ENCODE measurements at regions of chr5 and their contacts with region 1.

Region 1: DNA sequence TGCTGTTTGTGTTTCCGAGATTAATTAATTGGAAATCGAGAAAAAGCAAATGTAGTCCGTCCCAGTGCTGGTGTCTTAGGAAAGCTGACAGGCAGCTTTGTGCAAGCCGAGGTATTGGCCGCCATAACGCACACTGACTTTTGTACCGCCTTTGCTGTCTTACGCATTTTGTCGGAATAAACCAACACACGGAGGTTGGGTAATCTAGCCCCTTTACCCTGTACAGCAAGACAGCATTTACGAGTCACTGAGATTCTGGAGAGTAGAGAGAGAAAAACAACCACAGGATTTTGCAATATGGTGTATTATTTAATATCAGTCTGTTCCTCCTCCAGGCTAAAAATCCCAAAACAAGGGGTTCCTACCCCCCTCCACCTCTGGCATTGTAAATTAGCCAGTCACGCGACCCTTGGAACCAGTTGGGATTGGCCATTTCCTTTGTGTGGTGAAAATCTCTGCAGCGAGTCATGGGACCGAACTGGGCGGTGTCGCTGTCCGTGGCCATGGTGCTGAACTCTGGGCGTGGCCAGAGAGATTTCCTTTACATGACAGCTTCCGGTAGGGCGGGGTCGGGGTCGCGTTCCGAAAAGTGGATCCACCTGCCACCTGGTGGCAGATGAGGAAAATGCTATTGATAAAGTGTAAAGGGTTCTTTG is 10.3 kb upstream of the PCDHB1 start:
- DNase-seq: peak; percentile 99
- H3K27ac ChIP-seq: peak overlapping the region; percentile 32; the same call in 1 of the 2 replicates
- CTCF ChIP-seq: peak; percentile 86

Region 2: DNA sequence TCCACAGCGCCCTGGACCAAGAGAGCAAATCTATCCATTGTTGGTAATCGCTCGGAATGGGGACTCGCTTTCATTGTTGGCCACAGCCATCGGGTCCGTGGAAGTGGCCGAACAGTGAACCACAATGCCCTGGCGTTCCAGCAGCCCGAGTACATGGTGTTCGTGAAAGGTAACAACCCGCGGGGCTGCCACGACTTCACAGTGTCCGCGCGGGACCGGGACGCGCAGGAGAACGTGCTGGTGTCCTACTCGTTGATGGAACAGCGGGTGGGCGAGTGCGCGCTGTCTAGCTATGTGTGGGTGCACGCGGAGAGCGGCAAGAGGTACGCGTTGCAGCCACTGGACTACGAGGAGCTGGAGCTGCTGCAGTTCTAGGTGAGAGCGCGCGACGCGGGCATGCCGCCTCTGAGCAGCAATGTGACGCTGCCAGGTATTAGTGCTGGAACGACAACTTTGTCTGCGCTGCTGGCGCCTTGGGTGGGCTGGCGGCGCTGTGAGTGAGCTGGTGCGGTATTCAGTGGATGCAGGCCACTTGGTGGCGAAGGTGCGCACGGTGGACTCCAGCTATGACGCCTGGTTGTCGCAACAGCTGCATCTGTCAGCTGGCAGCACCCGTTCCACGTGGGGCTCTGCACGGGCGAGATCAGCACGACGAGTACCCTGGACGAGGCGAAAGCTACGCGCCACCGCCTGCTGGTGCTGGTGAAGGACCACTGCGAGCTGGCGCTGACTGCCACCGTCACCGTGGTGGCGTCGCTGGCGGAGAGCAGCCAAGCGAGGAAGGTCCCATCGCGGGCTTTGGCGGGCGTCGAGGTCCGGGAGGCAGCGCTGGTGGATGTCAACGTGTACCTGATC is 178.2 kb before region 1 on chr5:
- CTCF ChIA-PET with region 1: interaction called, 27 read pairs
- POLR2A ChIA-PET with region 1: no interaction called
- DNase-seq: no peak
- H3K27ac ChIP-seq: no peak overlapping the region
- CTCF ChIP-seq: no peak

Region 3: DNA sequence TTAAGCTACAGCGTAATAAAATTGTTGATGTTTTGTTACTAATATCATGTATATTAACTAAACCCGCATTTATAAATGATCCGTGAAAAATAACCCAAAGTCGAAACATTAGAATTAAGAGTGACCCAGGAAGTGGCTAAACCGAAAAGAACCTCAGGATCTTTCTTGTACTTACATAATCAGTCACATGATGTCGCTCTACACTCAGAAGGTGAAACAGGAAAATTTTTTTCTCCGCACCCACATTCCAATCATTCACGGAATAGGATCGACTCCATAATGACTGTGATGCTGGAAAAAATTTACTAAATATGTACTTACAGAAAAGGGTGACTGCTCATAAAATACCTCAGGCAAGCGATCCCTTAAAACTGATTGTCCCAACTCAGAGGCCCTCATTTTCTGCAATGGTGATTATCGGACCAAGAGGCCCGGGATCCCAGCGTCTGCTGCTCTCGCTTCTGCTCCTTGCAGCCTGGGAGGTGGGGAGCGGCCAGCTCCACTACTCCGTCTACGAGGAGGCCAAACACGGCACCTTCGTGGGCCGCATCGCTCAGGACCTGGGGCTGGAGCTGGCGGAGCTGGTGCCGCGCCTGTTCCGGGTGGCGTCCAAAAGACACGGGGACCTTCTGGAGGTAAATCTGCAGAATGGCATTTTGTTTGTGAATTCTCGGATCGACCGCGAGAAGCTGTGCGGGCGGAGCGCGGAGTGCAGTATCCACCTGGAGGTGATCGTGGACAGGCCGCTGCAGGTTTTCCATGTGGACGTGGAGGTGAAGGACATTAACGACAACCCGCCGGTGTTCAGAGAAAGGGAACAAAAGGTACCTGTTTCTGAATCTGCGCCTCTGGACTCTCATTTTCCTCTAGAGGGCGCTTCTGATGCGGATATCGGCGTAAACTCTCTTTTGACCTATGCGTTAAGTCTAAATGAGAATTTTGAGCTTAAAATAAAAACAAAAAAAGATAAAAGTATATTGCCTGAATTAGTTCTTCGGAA is 165.5 kb before region 1 on chr5 and contains the start of gene PCDHA12:
- CTCF ChIA-PET with region 1: interaction called, 50 read pairs
- POLR2A ChIA-PET with region 1: no interaction called
- DNase-seq: peak; percentile 54
- H3K27ac ChIP-seq: no peak within 1 kb of the TSS
- CTCF ChIP-seq: peak; percentile 12; the same call in 1 of the 2 replicates

Region 4: DNA sequence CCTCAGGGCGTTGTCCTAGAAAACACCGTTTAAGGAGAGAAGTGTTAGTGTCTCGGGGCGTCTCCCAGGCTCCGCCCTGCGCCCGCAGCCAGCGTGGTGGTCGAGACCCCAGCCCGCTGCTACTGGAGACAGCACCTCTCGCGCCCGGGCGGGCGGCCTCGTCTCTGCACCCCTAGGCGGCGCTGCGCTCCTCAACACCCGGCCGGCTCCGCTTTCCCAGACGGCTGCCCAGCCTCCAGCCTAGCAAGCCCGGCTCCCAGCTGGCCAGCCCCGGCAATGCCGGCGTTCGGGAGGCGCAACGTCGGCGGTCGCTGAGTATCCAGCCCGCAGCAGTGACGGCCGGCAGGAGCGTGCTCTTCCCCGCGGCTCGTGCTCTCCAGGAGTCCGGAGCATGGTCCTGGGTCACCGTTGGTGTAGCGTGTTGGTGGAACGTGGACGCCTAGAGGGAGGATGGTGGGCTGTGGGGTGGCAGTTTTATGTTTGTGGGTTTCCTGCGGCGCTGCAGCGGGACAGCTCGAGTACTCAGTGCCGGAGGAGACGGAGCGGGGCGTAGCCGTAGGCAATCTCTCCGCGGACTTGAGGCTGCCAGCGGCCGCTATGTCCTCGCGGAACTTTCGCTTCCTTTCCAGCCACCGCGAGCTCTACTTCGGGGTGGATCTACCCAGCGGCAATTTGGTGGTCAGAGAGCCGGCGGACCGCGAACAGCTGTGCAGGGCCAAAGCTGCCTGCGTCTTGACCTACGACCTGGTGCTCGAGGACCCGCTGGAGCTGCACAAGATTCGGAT is 114.3 kb before region 1 on chr5:
- CTCF ChIA-PET with region 1: interaction called, 85 read pairs
- POLR2A ChIA-PET with region 1: interaction called, 7 read pairs
- DNase-seq: peak; percentile 92
- H3K27ac ChIP-seq: peak overlapping the region; percentile 59
- CTCF ChIP-seq: peak; percentile 98

Region 5: DNA sequence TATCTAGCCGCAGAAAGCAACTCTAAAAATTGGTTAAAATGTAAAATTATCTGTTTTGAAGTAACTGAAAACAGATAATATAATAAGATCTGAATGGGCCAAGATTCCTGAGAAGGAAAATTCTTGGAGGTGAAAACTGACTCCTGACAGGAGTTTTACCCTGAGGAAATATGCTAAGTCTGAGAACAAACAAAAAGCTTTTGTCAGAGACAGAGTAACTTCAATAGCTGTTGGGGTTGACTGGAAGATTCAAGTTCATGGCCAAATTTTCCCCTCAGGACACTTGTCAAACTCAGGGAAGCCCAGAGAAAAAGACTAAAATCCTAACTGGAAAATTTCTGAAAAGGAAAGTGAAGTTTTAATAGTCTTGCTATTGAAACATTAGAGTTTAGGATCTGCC is 86.4 kb after region 1 on chr5:
- CTCF ChIA-PET with region 1: no interaction called
- POLR2A ChIA-PET with region 1: no interaction called
- DNase-seq: no peak
- H3K27ac ChIP-seq: no peak overlapping the region
- CTCF ChIP-seq: no peak

Region 6: GRCh38 chr5:141149812-141150211 is 108.9 kb after region 1 on chr5 and contains the start of gene PCDHB6:
- CTCF ChIA-PET with region 1: no interaction called
- POLR2A ChIA-PET with region 1: no interaction called
- DNase-seq: peak; percentile 26
- H3K27ac ChIP-seq: no peak within 1 kb of the TSS
- CTCF ChIP-seq: peak; percentile 28

Measured in RWPE1 (cell line).